B cell (primary cell): ENCODE measurements at regions of chr19 and their contacts with region 1.

Region 1: DNA sequence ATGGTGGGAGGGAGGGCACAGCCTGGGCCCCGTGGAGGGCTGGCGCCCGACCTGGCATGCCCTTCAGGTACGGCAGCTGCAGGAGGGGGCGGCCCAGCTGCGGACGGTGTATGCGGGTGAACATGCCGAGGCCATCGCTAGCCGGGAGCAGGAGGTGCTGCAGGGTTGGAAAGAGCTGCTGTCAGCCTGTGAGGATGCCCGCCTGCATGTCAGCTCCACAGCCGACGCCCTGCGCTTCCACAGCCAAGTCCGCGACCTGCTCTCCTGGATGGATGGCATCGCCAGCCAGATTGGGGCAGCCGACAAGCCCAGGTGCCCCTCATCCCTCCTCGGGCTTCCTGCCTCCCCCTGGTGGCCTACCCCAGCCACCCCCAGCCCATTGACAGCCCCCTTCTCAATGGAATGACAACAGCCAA is 16.6 kb upstream of the SHKBP1 start:
- DNase-seq: no peak
- ATAC-seq: no peak
- H3K4me3 ChIP-seq: no peak overlapping the region
- H3K4me3 Mint-ChIP-seq: no peak overlapping the region
- H3K27ac ChIP-seq: no peak overlapping the region
- H3K27ac Mint-ChIP-seq: no peak overlapping the region
- H3K4me1 ChIP-seq: no peaks in the 10 kb centered on the region
- H3K4me1 Mint-ChIP-seq: no peaks in the 10 kb centered on the region
- H3K27me3 ChIP-seq: peaks cover 0 to 26% (median 2%) of the 10 kb centered on the region in 4 experiments
- H3K27me3 Mint-ChIP-seq: peaks cover 36% of the 10 kb centered on the region
- CTCF ChIP-seq: no peak

Region 2: DNA sequence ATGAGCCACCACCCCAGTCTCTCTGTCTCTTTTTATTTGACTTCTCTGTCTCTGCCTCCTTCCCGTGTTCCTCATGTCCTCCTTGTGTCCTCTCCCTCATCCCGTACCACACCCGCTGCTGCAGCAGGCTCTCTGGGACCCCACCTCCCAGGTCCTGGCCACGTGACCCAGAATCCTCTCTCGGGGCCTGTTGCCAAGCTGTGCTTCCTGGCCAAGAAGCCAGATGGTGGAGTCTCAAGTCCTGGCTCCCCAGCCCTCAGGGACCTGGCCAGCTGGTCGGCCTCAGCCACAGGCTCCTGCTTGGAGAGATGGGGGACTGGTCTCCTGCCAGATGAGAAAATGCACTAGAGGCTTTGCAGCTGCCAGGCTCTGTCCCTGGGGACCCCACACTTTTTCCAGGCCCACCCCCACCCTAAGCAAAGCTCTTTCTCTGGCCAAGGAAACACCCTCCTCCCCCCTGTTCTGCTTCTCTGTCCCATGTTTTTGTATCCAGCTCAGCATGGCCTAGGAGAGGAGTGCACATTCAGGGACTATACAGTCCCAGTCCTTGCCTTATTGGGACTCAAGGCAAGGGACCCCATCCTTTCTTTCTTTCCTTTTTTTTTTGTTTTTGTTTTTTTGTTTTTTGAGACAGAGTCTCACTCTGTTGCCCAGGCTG is 17.8 kb before region 1 on chr19:
- CTCF ChIA-PET with region 1: interaction called, 3 read pairs
- POLR2A ChIA-PET with region 1: interaction called, 12 read pairs
- intact Hi-C with region 1: no loop called
- DNase-seq: no peak
- ATAC-seq: no peak
- H3K4me3 ChIP-seq: no peak overlapping the region
- H3K4me3 Mint-ChIP-seq: no peak overlapping the region
- H3K27ac ChIP-seq: no peak overlapping the region
- H3K27ac Mint-ChIP-seq: no peak overlapping the region
- H3K4me1 ChIP-seq: no peaks in the 10 kb centered on the region
- H3K4me1 Mint-ChIP-seq: no peaks in the 10 kb centered on the region
- H3K27me3 ChIP-seq: peaks cover 0 to 5% (median 3%) of the 10 kb centered on the region in 4 experiments
- H3K27me3 Mint-ChIP-seq: peaks cover 14% of the 10 kb centered on the region
- CTCF ChIP-seq: no peak

Region 3: GRCh38 chr19:40609561-40610395 is 49.7 kb after region 1 on chr19:
- CTCF ChIA-PET with region 1: no interaction called
- POLR2A ChIA-PET with region 1: no interaction called
- intact Hi-C with region 1: no loop called
- DNase-seq: peak; percentile 90
- ATAC-seq: peak; percentile 57
- H3K4me3 ChIP-seq: peak overlapping the region in 4 of 5 experiments; percentile 49 to 72 (median 62)
- H3K4me3 Mint-ChIP-seq: peak overlapping the region; percentile 92
- H3K27ac ChIP-seq: peak overlapping the region; percentile 83 to 93
- H3K27ac Mint-ChIP-seq: peak overlapping the region; percentile 98
- H3K4me1 ChIP-seq: peaks cover 38 to 58% of the 10 kb centered on the region in 2 donors
- H3K4me1 Mint-ChIP-seq: peaks cover 56% of the 10 kb centered on the region
- H3K27me3 ChIP-seq: no peaks in the 10 kb centered on the region
- H3K27me3 Mint-ChIP-seq: no peaks in the 10 kb centered on the region
- CTCF ChIP-seq: no peak